ENCODE measurements at regions of chr13 and their contacts with region 1.

Region 1: GRCh38 chr13:42110410-42111155 is 62.1 kb downstream of the DGKH start:
- DNase-seq: no peak

Region 2: GRCh38 chr13:41668130-41668757 is 442.3 kb before region 1 on chr13:
- intact Hi-C with region 1: loop called (anchors 1 kb)
- DNase-seq: peak in 4 of 10 donors; percentile 27 to 75 (median 40)